ENCODE measurements at regions of chr5 and their contacts with region 1.

Region 1: GRCh38 chr5:133025804-133026663 is at the start of gene ZCCHC10:
- DNase-seq: peak; percentile 96
- ATAC-seq: peak; percentile 100
- H3K4me3 Mint-ChIP-seq: peak within 1 kb of the TSS; percentile 92
- H3K27ac Mint-ChIP-seq: peak within 1 kb of the TSS; percentile 93
- H3K4me1 Mint-ChIP-seq: peaks cover 17% of the 10 kb centered on the region
- H3K27me3 Mint-ChIP-seq: peaks cover 2% of the 10 kb centered on the region
- CTCF ChIP-seq: no peak
- total RNA-seq, gene ZCCHC10: 27.0 to 31.1 TPM

Region 2: GRCh38 chr5:132736853-132737833 is 288.9 kb before region 1 on chr5 and contains the start of gene KIF3A:
- CTCF ChIA-PET with region 1: no interaction called
- POLR2A ChIA-PET with region 1: no interaction called
- intact Hi-C with region 1: no loop called
- DNase-seq: peak; percentile 99
- ATAC-seq: peak; percentile 94
- H3K4me3 Mint-ChIP-seq: peak within 1 kb of the TSS; percentile 83
- H3K27ac Mint-ChIP-seq: peak within 1 kb of the TSS; percentile 76
- H3K4me1 Mint-ChIP-seq: peaks cover 28% of the 10 kb centered on the region
- H3K27me3 Mint-ChIP-seq: no peaks in the 10 kb centered on the region
- CTCF ChIP-seq: no peak
- total RNA-seq, gene KIF3A: 16.4 to 17.0 TPM

Region 3: DNA sequence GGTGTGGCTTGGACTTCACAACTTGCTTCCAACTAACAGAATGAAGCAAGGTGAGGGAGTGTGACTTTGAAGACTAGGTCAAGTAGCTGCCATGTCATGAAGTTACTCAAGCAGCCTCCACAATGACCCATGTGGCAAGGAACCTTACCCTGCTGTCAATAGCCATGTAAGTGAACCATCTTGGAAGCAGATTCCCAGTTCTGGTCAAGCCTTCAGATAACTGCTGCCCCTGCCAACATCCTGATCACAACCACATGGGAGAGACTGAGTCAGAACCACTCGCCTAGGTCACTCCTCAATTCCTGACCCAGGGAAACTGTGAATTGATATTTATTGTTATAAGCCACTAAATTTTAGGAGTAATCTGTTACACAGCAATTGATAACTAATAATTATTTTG is 10.6 kb before region 1 on chr5:
- CTCF ChIA-PET with region 1: interaction called, 4 read pairs
- POLR2A ChIA-PET with region 1: interaction called, 10 read pairs
- intact Hi-C with region 1: no loop called
- DNase-seq: no peak
- ATAC-seq: no peak
- H3K4me3 Mint-ChIP-seq: no peak overlapping the region
- H3K27ac Mint-ChIP-seq: no peak overlapping the region
- H3K4me1 Mint-ChIP-seq: no peaks in the 10 kb centered on the region
- H3K27me3 Mint-ChIP-seq: no peaks in the 10 kb centered on the region
- CTCF ChIP-seq: no peak

Region 4: GRCh38 chr5:133051580-133052332 is 25.7 kb after region 1 on chr5 and contains the start of gene HSPA4:
- CTCF ChIA-PET with region 1: interaction called, 5 read pairs
- POLR2A ChIA-PET with region 1: interaction called, 24 read pairs
- intact Hi-C with region 1: no loop called
- DNase-seq: peak; percentile 99
- ATAC-seq: peak; percentile 90
- H3K4me3 Mint-ChIP-seq: peak within 1 kb of the TSS; percentile 86
- H3K27ac Mint-ChIP-seq: peak within 1 kb of the TSS; percentile 99
- H3K4me1 Mint-ChIP-seq: peaks cover 46% of the 10 kb centered on the region
- H3K27me3 Mint-ChIP-seq: no peaks in the 10 kb centered on the region
- CTCF ChIP-seq: no peak
- total RNA-seq, gene HSPA4: 229 to 232 TPM

Region 5: DNA sequence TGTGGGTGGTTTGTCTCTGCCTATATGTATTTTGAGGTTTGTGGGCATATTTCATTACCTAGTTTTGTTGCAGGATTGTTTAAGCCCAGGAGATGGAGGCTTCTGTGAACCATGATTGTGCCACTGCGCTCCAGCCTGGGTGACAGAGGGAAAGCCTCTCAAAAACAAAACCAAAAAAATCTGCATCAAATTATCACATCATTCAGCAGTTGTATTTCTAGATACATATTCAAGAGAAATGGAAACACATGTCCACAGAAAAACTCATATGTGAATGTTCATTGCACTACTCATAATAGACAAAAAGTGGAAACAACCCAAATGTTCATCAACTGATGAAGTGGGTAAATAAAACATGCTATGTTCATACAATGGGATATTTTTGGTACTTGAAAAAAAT is 55.7 kb after region 1 on chr5:
- CTCF ChIA-PET with region 1: no interaction called
- POLR2A ChIA-PET with region 1: no interaction called
- intact Hi-C with region 1: no loop called
- DNase-seq: no peak
- ATAC-seq: no peak
- H3K4me3 Mint-ChIP-seq: no peak overlapping the region
- H3K27ac Mint-ChIP-seq: peak overlapping the region; percentile 43
- H3K4me1 Mint-ChIP-seq: peaks cover 46% of the 10 kb centered on the region
- H3K27me3 Mint-ChIP-seq: no peaks in the 10 kb centered on the region
- CTCF ChIP-seq: no peak

Region 6: GRCh38 chr5:133423618-133424282 is 397.7 kb after region 1 on chr5:
- CTCF ChIA-PET with region 1: no interaction called
- POLR2A ChIA-PET with region 1: no interaction called
- intact Hi-C with region 1: no loop called
- DNase-seq: peak; percentile 78
- ATAC-seq: peak; percentile 94
- H3K4me3 Mint-ChIP-seq: no peak overlapping the region
- H3K27ac Mint-ChIP-seq: no peak overlapping the region
- H3K4me1 Mint-ChIP-seq: peaks cover 9% of the 10 kb centered on the region
- H3K27me3 Mint-ChIP-seq: peaks cover 14% of the 10 kb centered on the region
- CTCF ChIP-seq: peak; percentile 98

Measured in activated CD8-positive, alpha-beta T cell treated with anti-CD3 and anti-CD28 coated beads for 36 hours (primary cell).